ENCODE measurements at regions of chr7 and their contacts with region 1.

Region 1: GRCh38 chr7:101688183-101688831 is 59.2 kb upstream of the MYL10 start:
- DNase-seq: peak; percentile 46
- ATAC-seq: peak; percentile 98
- H3K4me3 ChIP-seq: peak overlapping the region; percentile 33
- H3K27ac ChIP-seq: no peak overlapping the region; the same call in 1 of the 2 replicates
- H3K4me1 ChIP-seq: peaks cover 5% of the 10 kb centered on the region
- H3K27me3 ChIP-seq: no peaks in the 10 kb centered on the region; the same call in 1 of the 2 replicates
- CTCF ChIP-seq: peak; percentile 87
- POLR2A ChIP-seq: 0 out of 2 replicates have a peak, but pooled peaks have one; percentile 37
- RAD21 ChIP-seq: peak; percentile 87

Region 2: GRCh38 chr7:101558742-101559325 is 129.5 kb before region 1 on chr7:
- CTCF ChIA-PET with region 1: no interaction called
- POLR2A ChIA-PET with region 1: no interaction called
- dilution Hi-C with region 1: no loop called
- in situ Hi-C with region 1: no loop called
- intact Hi-C with region 1: loop called (anchors 10 kb)
- DNase-seq: no peak
- ATAC-seq: no peak
- H3K4me3 ChIP-seq: no peak overlapping the region
- H3K27ac ChIP-seq: no peak overlapping the region
- H3K4me1 ChIP-seq: no peaks in the 10 kb centered on the region
- H3K27me3 ChIP-seq: peaks cover 55% of the 10 kb centered on the region
- CTCF ChIP-seq: no peak
- POLR2A ChIP-seq: no peak
- RAD21 ChIP-seq: no peak

Region 3: GRCh38 chr7:101953248-101953819 is 265.0 kb after region 1 on chr7:
- CTCF ChIA-PET with region 1: no interaction called
- POLR2A ChIA-PET with region 1: no interaction called
- dilution Hi-C with region 1: no loop called
- in situ Hi-C with region 1: no loop called
- intact Hi-C with region 1: loop called (anchors 10 kb)
- DNase-seq: peak; percentile 92
- ATAC-seq: peak; percentile 86
- H3K4me3 ChIP-seq: no peak overlapping the region
- H3K27ac ChIP-seq: peak overlapping the region; percentile 81
- H3K4me1 ChIP-seq: peaks cover 18% of the 10 kb centered on the region
- H3K27me3 ChIP-seq: no peaks in the 10 kb centered on the region
- CTCF ChIP-seq: no peak
- POLR2A ChIP-seq: no peak; the same call in 1 of the 2 replicates
- RAD21 ChIP-seq: peak; percentile 40

Region 4: DNA sequence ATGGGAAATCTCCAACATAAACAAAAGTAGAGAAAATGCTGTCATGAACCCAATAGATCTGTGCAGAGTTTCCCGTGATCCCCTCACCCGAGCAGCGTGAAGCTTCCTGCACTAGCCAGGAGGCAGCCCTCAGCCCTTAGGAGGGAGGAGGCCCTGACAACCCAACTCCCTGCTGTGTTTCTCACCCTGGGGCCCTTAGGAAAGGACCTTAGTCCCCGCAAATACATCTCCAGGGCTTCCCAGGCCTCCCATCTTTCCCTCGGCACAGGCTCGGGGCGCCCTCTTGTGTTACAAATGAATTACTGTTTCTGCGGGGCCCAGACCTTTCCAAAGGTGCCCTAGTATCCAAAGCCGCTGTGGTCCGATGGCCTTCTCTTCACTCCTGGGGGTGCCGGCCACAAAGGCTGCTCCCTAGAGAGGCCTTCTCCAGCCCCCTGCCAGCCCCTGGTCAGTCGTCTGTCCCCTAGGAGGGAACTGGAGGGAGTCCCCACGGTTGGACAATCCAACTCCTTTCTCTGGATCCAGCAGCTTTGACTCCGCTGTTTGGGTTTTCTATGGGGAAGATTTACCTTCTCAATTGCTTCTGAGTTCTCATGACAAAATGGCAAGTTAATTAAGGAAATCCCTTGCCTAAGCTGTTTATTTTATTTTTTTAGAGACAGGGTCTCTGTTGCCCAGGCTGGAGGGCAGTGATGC is 548.4 kb after region 1 on chr7:
- CTCF ChIA-PET with region 1: no interaction called
- POLR2A ChIA-PET with region 1: no interaction called
- dilution Hi-C with region 1: no loop called
- in situ Hi-C with region 1: loop called (anchors 10 kb)
- intact Hi-C with region 1: loop called (anchors 1 kb)
- DNase-seq: peak; percentile 56
- ATAC-seq: peak; percentile 95
- H3K4me3 ChIP-seq: no peak overlapping the region
- H3K27ac ChIP-seq: no peak overlapping the region
- H3K4me1 ChIP-seq: peaks cover 2% of the 10 kb centered on the region; the same call in 1 of the 2 replicates
- H3K27me3 ChIP-seq: no peaks in the 10 kb centered on the region
- CTCF ChIP-seq: peak; percentile 85
- POLR2A ChIP-seq: no peak
- RAD21 ChIP-seq: peak; percentile 95

Region 5: GRCh38 chr7:102272075-102272917 is 584.0 kb after region 1 on chr7:
- CTCF ChIA-PET with region 1: no interaction called
- POLR2A ChIA-PET with region 1: no interaction called
- dilution Hi-C with region 1: no loop called
- in situ Hi-C with region 1: no loop called
- intact Hi-C with region 1: loop called (anchors 2 kb)
- DNase-seq: peak; percentile 81
- ATAC-seq: peak; percentile 89
- H3K4me3 ChIP-seq: no peak overlapping the region
- H3K27ac ChIP-seq: no peak overlapping the region
- H3K4me1 ChIP-seq: peaks cover 12% of the 10 kb centered on the region
- H3K27me3 ChIP-seq: no peaks in the 10 kb centered on the region
- CTCF ChIP-seq: peak; percentile 94
- POLR2A ChIP-seq: no peak
- RAD21 ChIP-seq: peak; percentile 94

Region 6: DNA sequence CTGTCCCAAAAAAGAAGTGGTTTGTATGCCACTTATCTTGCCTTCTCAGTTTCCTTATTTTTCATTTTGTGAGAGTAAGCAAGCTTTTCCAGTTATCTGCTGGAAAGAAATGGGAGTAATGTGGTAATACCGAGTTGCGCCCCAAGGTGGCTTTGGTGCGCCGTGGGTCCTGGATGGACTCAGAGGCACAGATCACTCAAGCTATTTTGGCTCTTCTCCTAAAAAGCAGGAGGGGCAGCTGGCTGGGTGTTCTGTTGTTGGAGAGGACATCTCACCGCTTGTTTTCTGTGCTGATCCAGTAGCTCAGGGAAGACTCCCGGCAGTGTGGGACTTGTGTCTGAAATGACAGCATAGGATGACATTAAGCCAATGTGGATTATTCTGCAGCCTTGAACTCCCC is 724.2 kb after region 1 on chr7:
- CTCF ChIA-PET with region 1: no interaction called
- POLR2A ChIA-PET with region 1: no interaction called
- dilution Hi-C with region 1: no loop called
- in situ Hi-C with region 1: no loop called
- intact Hi-C with region 1: no loop called
- DNase-seq: peak; percentile 13
- ATAC-seq: no peak
- H3K4me3 ChIP-seq: no peak overlapping the region
- H3K27ac ChIP-seq: no peak overlapping the region
- H3K4me1 ChIP-seq: no peaks in the 10 kb centered on the region
- H3K27me3 ChIP-seq: no peaks in the 10 kb centered on the region
- CTCF ChIP-seq: peak; percentile 19; the same call in 1 of the 2 replicates
- POLR2A ChIP-seq: no peak
- RAD21 ChIP-seq: peak; percentile 23; the same call in 1 of the 2 replicates